ENCODE measurements at regions of chr14 and their contacts with region 1.

Region 1: DNA sequence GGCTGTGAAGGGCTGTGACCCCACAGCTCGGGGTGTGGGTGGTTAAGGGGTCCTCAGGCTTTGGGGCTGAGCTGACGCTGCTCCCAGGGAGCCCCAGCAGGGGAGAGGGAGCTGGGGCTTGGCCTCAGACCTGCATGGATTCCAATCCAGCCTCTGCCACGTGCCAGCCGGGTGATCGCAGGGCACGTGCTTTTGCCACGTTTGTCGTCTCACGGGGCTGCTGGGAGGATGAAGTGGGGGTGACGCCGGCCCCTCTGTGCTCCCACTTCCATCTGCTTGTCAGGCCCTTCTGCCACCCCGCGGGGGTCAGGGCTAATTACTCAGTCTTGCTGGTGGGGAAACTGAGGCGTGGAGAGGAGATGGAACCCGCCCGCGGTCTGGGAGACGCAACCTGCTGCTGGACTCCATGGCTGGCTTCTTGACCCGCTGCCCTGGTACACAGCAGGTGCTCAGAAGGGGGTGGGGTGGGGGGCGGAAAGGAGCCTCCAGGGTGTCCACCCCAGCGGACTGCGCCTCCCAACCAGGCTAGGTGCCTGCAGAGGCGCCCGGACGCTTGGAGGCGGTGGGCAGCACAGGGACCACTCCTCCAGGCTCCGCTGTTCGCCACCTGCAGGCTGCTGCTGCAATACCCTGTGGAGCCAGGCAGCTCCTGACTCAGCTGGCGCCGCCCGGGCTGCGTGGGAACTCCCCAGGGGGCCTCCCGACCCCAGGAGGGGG is 36.4 kb upstream of the PRIMA1 start:
- DNase-seq: no peak

Region 2: GRCh38 chr14:92471919-92472318 is 1352.8 kb before region 1 on chr14:
- intact Hi-C with region 1: loop called in 1 of 2 experiments (anchors 10 kb)
- DNase-seq: no peak

Region 3: DNA sequence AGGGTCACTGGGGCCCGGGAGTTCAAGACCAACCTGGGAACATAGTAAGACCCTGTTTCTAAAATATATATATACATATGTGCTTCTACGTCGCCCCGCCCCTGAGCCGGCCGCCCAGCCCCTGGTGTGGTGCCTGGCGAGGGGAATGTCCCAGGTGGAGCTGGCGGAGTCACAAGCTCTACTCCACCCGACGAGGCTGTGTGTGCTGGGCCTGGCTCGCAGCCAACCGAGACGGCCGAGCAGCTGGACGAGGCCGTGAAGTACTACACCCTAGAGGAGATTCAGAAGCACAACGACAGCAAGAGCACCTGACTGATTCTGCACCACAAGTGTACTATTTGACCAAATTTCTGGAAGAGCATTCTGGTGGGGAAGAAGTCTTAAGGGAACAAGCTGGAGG is 686.8 kb before region 1 on chr14:
- intact Hi-C with region 1: no loop called
- DNase-seq: no peak

Region 4: DNA sequence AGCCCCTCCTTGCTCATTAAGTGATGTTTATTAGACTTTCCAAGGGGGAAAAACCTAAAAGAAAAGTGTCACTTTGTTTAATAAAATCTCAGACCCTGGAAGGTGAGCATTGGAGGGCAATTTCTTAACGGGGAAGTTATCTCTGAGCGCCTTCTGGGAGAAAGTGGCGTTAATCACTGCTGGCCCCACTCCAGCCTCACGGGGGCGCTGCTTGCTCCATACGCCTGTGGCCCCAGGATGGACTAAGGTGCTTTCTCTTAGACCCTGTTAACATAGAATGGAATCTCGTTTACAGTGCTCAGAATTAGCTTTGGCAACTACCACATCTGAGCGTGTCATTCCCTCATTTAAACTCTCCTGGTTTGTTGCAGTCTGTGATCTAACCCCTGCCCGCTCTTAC is 20.0 kb before region 1 on chr14:
- intact Hi-C with region 1: loop called in 1 of 2 experiments (anchors 1 kb)
- DNase-seq: no peak